B cell (primary cell): ENCODE measurements at regions of chr19 and their contacts with region 1.

Region 1: GRCh38 chr19:54481322-54481930 is 8.3 kb upstream of the CDC42EP5 start:
- DNase-seq: peak; percentile 80
- ATAC-seq: peak; percentile 62
- H3K4me3 ChIP-seq: no peak overlapping the region
- H3K4me3 Mint-ChIP-seq: peak overlapping the region; percentile 42
- H3K27ac ChIP-seq: no peak overlapping the region
- H3K27ac Mint-ChIP-seq: peak overlapping the region; percentile 38
- H3K4me1 ChIP-seq: peaks cover 15 to 24% of the 10 kb centered on the region in 2 donors
- H3K4me1 Mint-ChIP-seq: peaks cover 20% of the 10 kb centered on the region
- H3K27me3 ChIP-seq: peaks cover 0 to 21% (median 9%) of the 10 kb centered on the region in 4 experiments
- H3K27me3 Mint-ChIP-seq: peaks cover 45% of the 10 kb centered on the region
- CTCF ChIP-seq: peak; percentile 84

Region 2: DNA sequence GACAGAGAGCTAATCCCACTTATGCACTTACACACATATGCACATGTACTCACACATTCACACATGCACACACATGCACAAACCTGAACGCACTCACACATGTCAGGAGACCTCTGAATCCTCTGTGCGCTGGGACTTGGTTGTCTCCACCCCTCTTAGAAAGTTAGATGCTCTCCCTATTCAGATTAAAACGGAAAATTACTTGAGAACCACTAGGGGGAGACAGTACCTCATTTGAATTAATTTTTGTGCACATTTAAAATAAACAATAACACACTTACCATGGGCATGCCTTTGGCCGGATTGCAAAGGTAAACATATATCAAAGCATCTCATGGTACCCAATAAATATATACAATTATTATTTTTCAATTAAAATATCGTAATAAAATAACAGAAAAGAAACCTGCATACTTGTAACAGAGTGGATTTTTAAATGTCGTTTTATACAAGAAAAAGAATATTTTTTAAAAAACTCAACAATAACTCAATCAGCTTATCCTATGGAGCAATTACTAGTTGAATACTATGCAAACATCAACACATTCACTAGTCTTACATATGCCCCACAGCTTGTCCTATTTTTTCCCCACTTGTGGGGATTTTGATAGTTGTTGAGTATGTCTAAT is 171.9 kb after region 1 on chr19:
- CTCF ChIA-PET with region 1: interaction called, 41 read pairs
- POLR2A ChIA-PET with region 1: no interaction called
- intact Hi-C with region 1: no loop called
- DNase-seq: peak; percentile 62
- ATAC-seq: peak; percentile 36
- H3K4me3 ChIP-seq: no peak overlapping the region
- H3K4me3 Mint-ChIP-seq: no peak overlapping the region
- H3K27ac ChIP-seq: no peak overlapping the region
- H3K27ac Mint-ChIP-seq: no peak overlapping the region
- H3K4me1 ChIP-seq: peaks cover 3% of the 10 kb centered on the region in 2 donors
- H3K4me1 Mint-ChIP-seq: peaks cover 9% of the 10 kb centered on the region
- H3K27me3 ChIP-seq: no peaks in the 10 kb centered on the region
- H3K27me3 Mint-ChIP-seq: no peaks in the 10 kb centered on the region
- CTCF ChIP-seq: peak; percentile 89

Region 3: GRCh38 chr19:54662730-54663129 is 181.3 kb after region 1 on chr19 and contains the start of gene LILRB4:
- CTCF ChIA-PET with region 1: interaction called, 13 read pairs
- POLR2A ChIA-PET with region 1: no interaction called
- intact Hi-C with region 1: no loop called
- DNase-seq: no peak
- ATAC-seq: no peak
- H3K4me3 ChIP-seq: peak within 1 kb of the TSS in 1 of 5 experiments; percentile 43
- H3K4me3 Mint-ChIP-seq: peak within 1 kb of the TSS; percentile 66
- H3K27ac ChIP-seq: no peak within 1 kb of the TSS
- H3K27ac Mint-ChIP-seq: no peak within 1 kb of the TSS
- H3K4me1 ChIP-seq: peaks cover 27 to 39% of the 10 kb centered on the region in 2 donors
- H3K4me1 Mint-ChIP-seq: peaks cover 29% of the 10 kb centered on the region
- H3K27me3 ChIP-seq: peaks cover 0 to 11% (median 3%) of the 10 kb centered on the region in 4 experiments
- H3K27me3 Mint-ChIP-seq: peaks cover 11% of the 10 kb centered on the region
- CTCF ChIP-seq: no peak
- total RNA-seq, gene LILRB4: 0.61 and 1.1 TPM in 2 replicates

Region 4: DNA sequence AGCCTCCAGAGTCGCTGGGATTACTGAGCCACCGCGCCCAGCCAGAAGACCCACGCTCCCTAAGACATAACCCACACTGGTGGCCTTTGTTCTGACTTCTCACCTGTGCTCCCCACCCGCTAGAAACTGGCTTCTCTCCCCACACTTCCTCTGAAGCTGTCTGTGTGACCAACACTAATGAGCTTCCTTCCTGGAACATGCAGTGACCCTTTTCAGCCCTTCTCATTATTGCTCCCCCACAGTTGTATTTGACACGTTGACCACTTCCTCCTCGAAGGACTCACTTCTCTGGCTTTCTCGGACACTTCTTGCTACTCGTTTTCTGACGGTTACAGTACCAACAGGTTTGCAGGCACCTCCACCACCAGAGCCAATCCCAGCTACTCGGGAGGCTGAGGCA is 435.4 kb after region 1 on chr19:
- CTCF ChIA-PET with region 1: interaction called, 3 read pairs
- POLR2A ChIA-PET with region 1: no interaction called
- intact Hi-C with region 1: loop called (anchors 10 kb)
- DNase-seq: no peak
- ATAC-seq: no peak
- H3K4me3 ChIP-seq: no peak overlapping the region
- H3K4me3 Mint-ChIP-seq: no peak overlapping the region
- H3K27ac ChIP-seq: no peak overlapping the region
- H3K27ac Mint-ChIP-seq: no peak overlapping the region
- H3K4me1 ChIP-seq: no peaks in the 10 kb centered on the region
- H3K4me1 Mint-ChIP-seq: peaks cover 3% of the 10 kb centered on the region
- H3K27me3 ChIP-seq: peaks cover 0 to 5% (median 2%) of the 10 kb centered on the region in 4 experiments
- H3K27me3 Mint-ChIP-seq: peaks cover 24% of the 10 kb centered on the region
- CTCF ChIP-seq: no peak